CD8-positive, alpha-beta T cell (primary cell): ENCODE measurements at regions of chr4 and their contacts with region 1.

Region 1: GRCh38 chr4:121112530-121112929 is 40.2 kb upstream of the NDNF start:
- DNase-seq: peak in 2 of 9 experiments; percentile 6 to 26
- ATAC-seq: no peak
- H3K4me3 ChIP-seq: no peak overlapping the region
- H3K4me3 Mint-ChIP-seq: no peak overlapping the region
- H3K27ac ChIP-seq: no peak overlapping the region
- H3K27ac Mint-ChIP-seq: no peak overlapping the region
- H3K4me1 ChIP-seq: no peaks in the 10 kb centered on the region
- H3K4me1 Mint-ChIP-seq: peaks cover 13% of the 10 kb centered on the region
- H3K27me3 ChIP-seq: no peaks in the 10 kb centered on the region
- H3K27me3 Mint-ChIP-seq: no peaks in the 10 kb centered on the region
- CTCF ChIP-seq: peak; percentile 73

Region 2: GRCh38 chr4:119113033-119113655 is 1999.4 kb before region 1 on chr4:
- CTCF ChIA-PET with region 1: no interaction called
- POLR2A ChIA-PET with region 1: no interaction called
- intact Hi-C with region 1: no loop called
- DNase-seq: peak in 1 of 9 experiments; percentile 13
- ATAC-seq: peak; percentile 31
- H3K4me3 ChIP-seq: no peak overlapping the region
- H3K4me3 Mint-ChIP-seq: no peak overlapping the region
- H3K27ac ChIP-seq: no peak overlapping the region
- H3K27ac Mint-ChIP-seq: no peak overlapping the region
- H3K4me1 ChIP-seq: no peaks in the 10 kb centered on the region
- H3K4me1 Mint-ChIP-seq: peaks cover 3% of the 10 kb centered on the region
- H3K27me3 ChIP-seq: no peaks in the 10 kb centered on the region
- H3K27me3 Mint-ChIP-seq: peaks cover 4% of the 10 kb centered on the region
- CTCF ChIP-seq: no peak

Region 3: GRCh38 chr4:120816296-120816965 is 296.1 kb before region 1 on chr4:
- CTCF ChIA-PET with region 1: no interaction called
- POLR2A ChIA-PET with region 1: no interaction called
- intact Hi-C with region 1: no loop called
- DNase-seq: no peak
- ATAC-seq: no peak
- H3K4me3 ChIP-seq: no peak overlapping the region
- H3K4me3 Mint-ChIP-seq: peak overlapping the region; percentile 33
- H3K27ac ChIP-seq: no peak overlapping the region
- H3K27ac Mint-ChIP-seq: peak overlapping the region; percentile 23
- H3K4me1 ChIP-seq: no peaks in the 10 kb centered on the region
- H3K4me1 Mint-ChIP-seq: peaks cover 3% of the 10 kb centered on the region
- H3K27me3 ChIP-seq: no peaks in the 10 kb centered on the region
- H3K27me3 Mint-ChIP-seq: no peaks in the 10 kb centered on the region
- CTCF ChIP-seq: no peak

Region 4: GRCh38 chr4:121129606-121130325 is 17.2 kb after region 1 on chr4:
- CTCF ChIA-PET with region 1: no interaction called
- POLR2A ChIA-PET with region 1: no interaction called
- intact Hi-C with region 1: loop called in 1 of 2 experiments (anchors 2 kb)
- DNase-seq: no peak
- ATAC-seq: no peak
- H3K4me3 ChIP-seq: no peak overlapping the region
- H3K4me3 Mint-ChIP-seq: no peak overlapping the region
- H3K27ac ChIP-seq: no peak overlapping the region
- H3K27ac Mint-ChIP-seq: peak overlapping the region; percentile 29
- H3K4me1 ChIP-seq: peaks cover 14% of the 10 kb centered on the region
- H3K4me1 Mint-ChIP-seq: peaks cover 32% of the 10 kb centered on the region
- H3K27me3 ChIP-seq: no peaks in the 10 kb centered on the region
- H3K27me3 Mint-ChIP-seq: no peaks in the 10 kb centered on the region
- CTCF ChIP-seq: no peak